Activated naive CD4-positive, alpha-beta T cell treated with anti-CD3 and anti-CD28 coated beads, Interleukin-2, amount 10 ng/mL, durations not matched to agents 7 days and 5 days (primary cell): ENCODE measurements at regions of chr5 and their contacts with region 1.

Region 1: DNA sequence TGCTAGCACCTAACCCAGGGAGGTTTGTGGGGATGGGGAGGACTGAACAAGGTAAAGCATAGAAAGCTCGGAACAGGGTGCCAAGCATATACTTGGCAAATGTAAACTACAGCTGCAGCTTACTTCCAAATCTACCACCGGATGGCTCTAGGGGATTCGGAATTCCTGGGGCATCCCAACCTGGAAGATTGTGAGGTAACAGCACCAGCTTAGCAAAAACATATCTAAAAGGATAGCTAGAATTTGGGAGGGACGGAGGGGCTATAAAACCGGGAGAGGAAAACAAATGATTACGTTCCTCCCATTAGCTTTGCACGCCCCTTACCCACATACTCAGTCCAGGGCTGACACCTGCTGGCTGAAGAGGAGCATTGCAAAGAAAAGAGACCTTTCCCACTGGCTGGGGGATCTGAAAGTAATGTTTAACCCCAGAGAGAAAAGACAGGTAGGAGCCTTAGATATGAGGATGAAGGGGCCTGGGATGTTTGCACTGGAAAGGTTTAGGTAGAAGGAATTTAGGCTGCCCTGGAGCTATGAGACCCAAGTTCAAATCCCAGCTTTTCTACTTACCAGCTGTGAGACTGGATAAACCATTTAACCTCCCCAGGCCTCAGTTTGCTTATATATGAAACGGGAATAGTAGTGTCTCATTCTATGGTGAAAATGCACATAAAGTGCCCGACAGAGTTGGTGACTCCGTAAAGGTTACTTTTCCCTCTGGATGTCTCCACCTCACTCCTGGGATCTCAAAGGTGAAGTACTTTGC is 73.6 kb downstream of the FAM114A2 start:
- DNase-seq: peak; percentile 59
- H3K4me3 Mint-ChIP-seq: no peak overlapping the region
- H3K27ac Mint-ChIP-seq: no peak overlapping the region
- H3K4me1 Mint-ChIP-seq: peaks cover 2% of the 10 kb centered on the region
- H3K27me3 Mint-ChIP-seq: peaks cover 9% of the 10 kb centered on the region

Region 2: GRCh38 chr5:152532714-152533113 is 1432.3 kb before region 1 on chr5:
- CTCF ChIA-PET with region 1: interaction called, 42 read pairs
- DNase-seq: no peak
- H3K4me3 Mint-ChIP-seq: no peak overlapping the region
- H3K27ac Mint-ChIP-seq: no peak overlapping the region
- H3K4me1 Mint-ChIP-seq: peaks cover 11% of the 10 kb centered on the region
- H3K27me3 Mint-ChIP-seq: peaks cover 7% of the 10 kb centered on the region

Region 3: GRCh38 chr5:152560512-152561137 is 1404.4 kb before region 1 on chr5:
- CTCF ChIA-PET with region 1: interaction called, 11 read pairs
- DNase-seq: peak; percentile 59
- H3K4me3 Mint-ChIP-seq: no peak overlapping the region
- H3K27ac Mint-ChIP-seq: no peak overlapping the region
- H3K4me1 Mint-ChIP-seq: no peaks in the 10 kb centered on the region
- H3K27me3 Mint-ChIP-seq: no peaks in the 10 kb centered on the region

Region 4: DNA sequence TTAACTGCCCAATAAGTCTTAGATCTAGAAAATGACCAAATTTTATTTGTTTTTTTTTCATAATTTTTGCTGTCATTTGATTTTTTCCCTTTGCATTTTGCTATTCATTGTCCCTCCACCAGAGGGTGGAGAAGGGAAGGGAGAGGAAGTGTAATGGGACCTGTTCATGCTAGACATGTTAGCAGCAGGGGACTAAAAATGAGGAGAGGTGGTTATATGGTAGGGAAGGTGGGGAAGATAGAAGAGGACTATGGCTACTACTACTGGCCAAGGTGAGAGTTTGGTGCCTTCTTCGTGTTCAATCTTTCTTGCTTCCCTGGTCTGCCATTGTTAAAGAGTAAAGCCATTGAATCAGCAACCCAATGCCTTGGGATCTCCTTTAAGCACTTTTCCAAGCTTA is 468.2 kb before region 1 on chr5:
- CTCF ChIA-PET with region 1: interaction called, 10 read pairs
- DNase-seq: no peak
- H3K4me3 Mint-ChIP-seq: no peak overlapping the region
- H3K27ac Mint-ChIP-seq: no peak overlapping the region
- H3K4me1 Mint-ChIP-seq: no peaks in the 10 kb centered on the region
- H3K27me3 Mint-ChIP-seq: peaks cover 9% of the 10 kb centered on the region